GM18951 (cell line): ENCODE measurements at regions of chr7 and their contacts with region 1.

Region 1: GRCh38 chr7:29189743-29190201 is 4.8 kb upstream of the CHN2 start:
- POLR2A ChIP-seq: no peak

Region 2: DNA sequence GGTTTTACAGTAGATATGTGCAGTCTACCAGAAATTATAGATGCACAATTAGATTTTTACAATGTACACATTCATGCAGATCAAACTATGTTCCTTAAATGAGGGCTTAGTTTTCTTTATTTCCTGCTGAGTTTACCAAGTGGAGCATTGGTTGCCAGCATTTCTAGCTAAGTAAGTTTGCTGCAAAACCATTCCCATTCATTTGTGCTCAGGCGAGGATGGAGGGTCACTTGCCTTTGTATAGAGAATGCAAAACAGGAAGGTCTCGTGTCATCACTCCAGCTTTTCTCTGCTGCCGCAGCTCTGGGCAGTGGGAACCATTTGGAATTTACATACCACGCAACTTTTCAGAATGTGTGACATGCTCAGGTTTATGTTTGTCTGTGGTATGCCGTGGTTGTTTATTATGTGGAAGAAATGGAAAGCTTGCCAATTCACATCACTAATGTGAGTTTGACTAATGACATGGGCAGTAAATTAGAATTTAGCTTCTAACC is 430.2 kb before region 1 on chr7:
- in situ Hi-C with region 1: no loop called
- POLR2A ChIP-seq: no peak

Region 3: DNA sequence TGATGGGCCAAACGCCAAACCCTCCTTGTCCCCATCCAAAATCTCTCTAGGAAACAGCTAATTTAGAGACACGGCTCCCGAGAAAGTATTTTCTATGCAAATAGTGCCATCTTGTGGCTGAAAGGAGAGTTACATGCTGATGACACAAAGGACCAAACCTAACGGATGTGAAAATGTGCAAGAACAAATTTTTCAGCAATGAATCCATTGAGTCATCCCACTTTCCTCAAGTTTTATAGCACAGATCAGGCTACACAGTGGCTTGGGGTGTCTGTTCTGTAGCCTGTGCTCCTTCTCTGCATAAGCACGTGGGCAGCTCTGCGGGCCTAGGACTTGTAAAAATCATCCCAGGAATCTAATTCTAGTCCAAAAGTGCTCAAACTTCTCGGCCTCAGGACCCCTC is 219.1 kb after region 1 on chr7:
- in situ Hi-C with region 1: loop called (anchors 10 kb)
- POLR2A ChIP-seq: no peak

Region 4: DNA sequence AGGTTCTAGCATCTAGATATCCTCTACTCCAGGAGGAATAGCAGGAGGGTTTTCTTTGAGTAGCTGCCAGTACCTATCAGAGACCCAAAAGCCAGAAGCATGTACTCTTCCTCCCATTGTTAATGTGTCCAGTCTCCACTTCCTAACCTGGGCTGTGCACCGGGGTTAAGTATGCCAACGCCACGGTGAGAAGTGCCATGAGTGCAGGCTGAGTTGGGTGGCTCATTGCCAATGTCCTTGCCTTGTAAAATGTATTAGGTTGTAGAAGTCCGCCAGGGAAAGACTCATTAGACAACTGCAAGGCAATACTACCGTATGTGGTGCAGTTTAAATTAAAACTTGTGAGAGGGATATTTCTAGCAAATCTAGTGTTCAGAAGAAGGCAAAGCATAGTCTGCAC is 318.8 kb after region 1 on chr7:
- in situ Hi-C with region 1: no loop called
- POLR2A ChIP-seq: no peak

Region 5: DNA sequence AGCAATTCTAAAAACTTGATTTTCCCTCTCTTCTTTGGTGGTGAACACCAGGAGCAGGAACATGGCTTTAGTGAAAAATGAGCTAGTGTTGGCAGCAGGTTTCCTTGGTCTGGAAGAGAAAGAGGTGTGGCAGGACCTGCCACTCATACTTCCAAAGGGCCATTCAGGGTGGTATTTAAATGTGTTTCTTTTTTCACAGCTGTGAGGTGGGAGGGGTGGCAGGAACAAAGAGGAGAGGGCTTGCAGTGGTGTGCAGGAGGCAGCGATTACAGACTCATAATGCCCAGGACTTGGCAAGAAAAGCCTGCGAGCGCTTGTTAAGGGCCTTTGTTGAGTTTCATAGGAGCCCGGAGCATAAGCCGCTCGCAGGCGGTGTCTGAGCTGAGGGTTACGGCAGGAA is 653.3 kb after region 1 on chr7:
- in situ Hi-C with region 1: no loop called
- POLR2A ChIP-seq: no peak